Heart left ventricle (tissue), 16 donors: ENCODE measurements at regions of chr10 and their contacts with region 1.

Region 1: DNA sequence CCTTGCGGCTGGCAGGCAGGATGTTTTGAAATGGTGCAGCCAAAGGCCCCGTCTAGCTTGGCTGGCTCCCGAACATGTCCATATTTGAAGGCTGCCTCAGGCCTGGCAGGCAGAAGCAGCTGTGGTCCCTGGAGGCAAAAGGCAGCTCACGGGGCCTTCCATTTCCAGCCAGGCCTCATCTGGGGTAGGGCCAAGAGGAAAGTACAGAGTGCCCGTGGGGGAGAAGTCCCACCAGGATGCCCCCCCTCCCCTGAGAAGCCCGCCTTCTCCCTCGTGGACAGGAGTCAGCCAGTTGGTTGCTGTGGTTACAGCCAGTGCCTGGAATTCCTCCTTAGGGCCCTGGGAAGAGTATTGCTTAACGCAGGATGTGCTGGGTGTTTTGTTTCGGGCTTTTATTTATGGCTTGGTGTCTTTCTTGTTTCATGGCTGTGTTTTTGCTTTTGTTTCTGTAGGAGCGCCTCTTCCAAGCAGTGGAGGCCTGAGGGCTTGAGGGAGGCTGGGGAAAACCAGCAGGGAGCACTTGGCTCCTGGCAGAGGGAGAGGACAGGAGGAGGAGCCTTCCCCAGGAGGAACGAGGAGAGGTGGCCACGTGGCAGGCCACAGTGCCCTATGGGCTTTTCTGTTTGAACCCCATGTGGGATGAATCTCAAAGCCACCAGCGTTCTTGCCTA is 45.4 kb downstream of the CHST3 start:
- DNase-seq: peak; percentile 85 to 93 (median 87)
- ATAC-seq: peak; percentile 62 to 88 (median 76)
- H3K4me3 ChIP-seq: no peak overlapping the region
- H3K27ac ChIP-seq: peak overlapping the region; percentile 71 to 97 (median 87)
- H3K4me1 ChIP-seq: peaks cover 7 to 74% (median 51%) of the 10 kb centered on the region in 12 donors
- H3K27me3 ChIP-seq: no peaks in the 10 kb centered on the region
- CTCF ChIP-seq: no peak
- POLR2A ChIP-seq: peak in 1 of 2 donors; percentile 19

Region 2: DNA sequence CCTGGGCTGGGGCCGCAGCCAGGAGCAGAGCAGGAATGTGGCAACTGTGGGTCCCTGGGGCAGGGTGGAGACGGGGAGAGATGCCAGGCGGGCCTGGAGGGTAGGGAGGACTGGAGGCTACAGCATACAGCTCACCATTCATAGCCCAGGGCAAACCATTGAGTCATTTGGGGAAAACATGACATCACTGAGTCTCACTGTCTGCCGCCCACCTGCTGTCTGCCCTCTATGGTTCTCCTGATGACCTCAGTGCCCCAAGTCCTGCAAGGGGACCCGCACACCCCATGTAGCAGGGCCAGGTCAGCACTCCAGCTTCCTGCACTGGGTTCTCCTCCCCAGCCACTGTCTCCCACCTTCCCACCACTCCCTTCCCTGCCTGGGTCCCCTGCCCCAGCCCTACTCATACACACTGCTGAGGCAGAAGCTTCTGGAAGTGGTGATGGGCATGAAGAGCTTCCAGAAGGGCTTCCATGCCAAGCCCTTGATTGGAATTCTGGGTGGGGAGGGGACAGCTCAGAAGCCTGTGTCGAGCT is 35.0 kb before region 1 on chr10:
- intact Hi-C with region 1: loop called in 4 of 10 experiments (anchors 5 kb)
- DNase-seq: peak in 1 of 5 donors; percentile 70
- ATAC-seq: peak in 3 of 4 donors; percentile 14 to 54 (median 16)
- H3K4me3 ChIP-seq: no peak overlapping the region
- H3K27ac ChIP-seq: peak overlapping the region in 11 of 12 donors; percentile 71 to 91 (median 81)
- H3K4me1 ChIP-seq: peaks cover 7 to 99% (median 88%) of the 10 kb centered on the region in 12 donors
- H3K27me3 ChIP-seq: no peaks in the 10 kb centered on the region
- CTCF ChIP-seq: no peak
- POLR2A ChIP-seq: no peak

Region 3: GRCh38 chr10:72030762-72031543 is 21.4 kb after region 1 on chr10:
- intact Hi-C with region 1: loop called in 2 of 10 experiments (anchors 2 kb)
- DNase-seq: peak in 4 of 5 donors; percentile 50 to 87 (median 78)
- ATAC-seq: peak; percentile 92 to 93 (median 92)
- H3K4me3 ChIP-seq: no peak overlapping the region
- H3K27ac ChIP-seq: peak overlapping the region in 10 of 12 donors; percentile 10 to 80 (median 65)
- H3K4me1 ChIP-seq: peaks cover 0 to 43% (median 12%) of the 10 kb centered on the region in 12 donors
- H3K27me3 ChIP-seq: no peaks in the 10 kb centered on the region
- CTCF ChIP-seq: no peak
- POLR2A ChIP-seq: no peak